A673 (cell line): ENCODE measurements at regions of chr12 and their contacts with region 1.

Region 1: GRCh38 chr12:78739653-78740052 is 124.9 kb upstream of the SYT1 start:
- DNase-seq: peak; percentile 89
- H3K4me3 ChIP-seq: peak overlapping the region; percentile 5
- H3K27ac ChIP-seq: peak overlapping the region; percentile 95
- H3K4me1 ChIP-seq: peaks cover 59% of the 10 kb centered on the region
- H3K27me3 ChIP-seq: no peaks in the 10 kb centered on the region
- CTCF ChIP-seq: no peak

Region 2: DNA sequence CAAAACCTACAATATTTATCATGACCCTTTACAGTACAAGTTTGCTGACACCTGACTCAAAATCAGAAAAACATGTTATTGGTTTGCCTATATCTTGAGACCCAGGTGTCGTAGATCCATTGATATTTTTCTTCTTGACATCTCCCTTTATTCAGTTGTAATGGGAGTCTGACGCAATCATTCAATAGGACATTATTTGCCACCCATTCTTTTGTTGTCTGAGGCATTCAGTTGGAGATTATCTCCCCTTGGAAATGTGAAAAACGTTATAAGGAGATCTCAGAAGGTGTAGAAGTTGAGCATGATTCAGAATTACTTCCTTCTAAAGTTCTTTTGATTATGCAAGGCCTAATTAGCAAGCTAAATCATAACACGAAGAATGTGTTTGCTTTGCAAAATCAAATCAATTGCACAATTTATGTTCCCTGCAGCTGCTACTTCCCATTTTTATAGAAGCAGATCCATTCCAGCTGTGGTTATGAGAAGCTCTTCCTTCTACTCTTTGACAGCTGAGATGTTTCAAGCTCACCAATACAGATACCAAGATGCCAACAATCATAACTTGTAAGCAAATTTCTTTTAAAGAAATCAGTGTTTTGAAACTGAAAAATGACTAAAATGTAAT is 103.3 kb before region 1 on chr12:
- CTCF ChIA-PET with region 1: no interaction called
- POLR2A ChIA-PET with region 1: no interaction called
- intact Hi-C with region 1: loop called (anchors 5 kb)
- DNase-seq: peak; percentile 83
- H3K4me3 ChIP-seq: no peak overlapping the region
- H3K27ac ChIP-seq: peak overlapping the region; percentile 49
- H3K4me1 ChIP-seq: peaks cover 28% of the 10 kb centered on the region
- H3K27me3 ChIP-seq: no peaks in the 10 kb centered on the region
- CTCF ChIP-seq: no peak

Region 3: DNA sequence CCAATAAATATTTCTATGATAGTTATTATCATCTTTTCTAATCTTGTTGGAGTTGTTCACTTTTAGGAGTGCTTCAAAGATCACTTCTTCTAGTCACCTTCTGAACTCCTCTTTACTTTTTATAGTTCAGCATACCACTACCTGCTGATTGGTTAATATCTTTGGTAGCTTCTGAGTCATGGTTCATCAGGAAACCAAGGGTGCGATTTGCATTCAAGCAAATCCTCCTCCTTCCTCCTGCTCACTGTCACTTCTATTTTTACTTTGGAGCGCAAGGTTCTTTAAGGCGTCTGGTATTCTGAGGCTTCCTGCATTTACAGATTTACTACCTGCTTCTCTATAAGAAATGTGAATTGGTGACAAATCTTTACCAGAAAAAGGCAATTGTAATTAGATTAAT is 148.9 kb after region 1 on chr12:
- CTCF ChIA-PET with region 1: no interaction called
- POLR2A ChIA-PET with region 1: no interaction called
- intact Hi-C with region 1: loop called (anchors 2 kb)
- DNase-seq: peak; percentile 93
- H3K4me3 ChIP-seq: peak overlapping the region; percentile 23
- H3K27ac ChIP-seq: peak overlapping the region; percentile 74
- H3K4me1 ChIP-seq: peaks cover 87% of the 10 kb centered on the region
- H3K27me3 ChIP-seq: no peaks in the 10 kb centered on the region
- CTCF ChIP-seq: no peak

Region 4: DNA sequence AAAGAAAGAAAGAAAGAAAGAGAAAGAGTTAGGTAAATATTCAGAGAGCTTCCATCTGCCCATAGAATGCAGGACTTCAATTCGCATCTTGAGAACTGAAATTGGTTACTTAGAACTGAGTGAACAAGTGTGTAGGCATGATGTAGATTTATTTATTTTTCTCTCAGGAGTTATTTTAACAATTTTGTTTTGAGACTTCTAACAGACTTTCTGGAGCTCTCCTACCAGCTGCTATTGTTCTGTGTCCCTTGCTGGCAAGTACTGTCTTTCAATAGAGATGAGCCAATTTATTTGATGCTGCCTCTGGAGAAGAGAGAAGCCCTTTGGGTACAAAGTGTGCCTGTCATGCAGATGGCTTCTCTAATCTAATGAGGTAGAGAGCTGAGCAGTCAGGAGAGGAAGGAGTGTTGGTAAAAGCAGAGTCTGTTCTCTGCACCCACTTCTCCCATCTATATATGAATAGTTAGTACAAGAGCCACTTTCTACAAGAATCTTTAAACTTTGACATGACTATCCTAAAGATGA is 191.9 kb after region 1 on chr12:
- CTCF ChIA-PET with region 1: no interaction called
- POLR2A ChIA-PET with region 1: no interaction called
- intact Hi-C with region 1: loop called (anchors 2 kb)
- DNase-seq: peak; percentile 83
- H3K4me3 ChIP-seq: peak overlapping the region; percentile 6
- H3K27ac ChIP-seq: peak overlapping the region; percentile 92
- H3K4me1 ChIP-seq: peaks cover 70% of the 10 kb centered on the region
- H3K27me3 ChIP-seq: no peaks in the 10 kb centered on the region
- CTCF ChIP-seq: no peak